ENCODE measurements at regions of chr17 and their contacts with region 1.

Region 1: GRCh38 chr17:75720725-75721462 is at the start of gene ITGB4:
- DNase-seq: peak; percentile 87
- ATAC-seq: peak; percentile 84
- H3K4me3 Mint-ChIP-seq: peak within 1 kb of the TSS; percentile 83
- H3K27ac Mint-ChIP-seq: peak within 1 kb of the TSS; percentile 94
- H3K4me1 Mint-ChIP-seq: peaks cover 7% of the 10 kb centered on the region
- H3K27me3 Mint-ChIP-seq: peaks cover 22% of the 10 kb centered on the region
- CTCF ChIP-seq: no peak
- total RNA-seq, gene ITGB4: 9.5 to 11.2 TPM (median 10.6 TPM) in 3 replicates

Region 2: DNA sequence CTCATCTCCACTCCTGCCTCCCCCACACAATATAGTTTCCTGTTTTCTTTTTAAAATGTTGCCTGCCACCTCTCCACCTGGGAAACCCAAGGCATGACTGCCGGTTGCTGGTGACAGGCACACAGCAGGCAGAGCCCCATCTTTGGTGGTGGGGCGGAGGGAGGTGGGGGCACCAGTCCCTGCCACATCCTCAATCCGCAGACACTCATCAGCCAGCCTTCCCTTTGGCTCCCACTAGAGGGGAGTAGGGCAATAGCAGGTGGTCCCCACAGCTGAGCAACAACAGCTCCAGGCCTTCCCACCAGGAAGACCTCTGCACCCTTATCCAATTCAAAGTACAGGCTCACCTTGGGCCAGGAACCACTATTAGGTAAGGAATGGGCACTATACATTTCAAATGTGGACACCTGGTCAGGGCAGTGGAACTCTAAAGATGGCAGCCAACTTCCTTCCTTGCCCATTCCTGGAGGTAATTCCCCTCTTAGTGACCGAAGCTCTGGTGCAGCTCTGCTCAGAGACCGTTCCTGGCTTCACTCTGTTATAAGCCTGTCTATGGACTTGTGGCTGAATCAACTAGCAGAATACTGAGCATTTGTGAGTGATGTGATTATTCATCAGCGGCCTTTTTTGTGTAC is 67.9 kb before region 1 on chr17:
- CTCF ChIA-PET with region 1: interaction called, 17 read pairs
- POLR2A ChIA-PET with region 1: interaction called, 4 read pairs
- DNase-seq: peak; percentile 76
- ATAC-seq: peak; percentile 99
- H3K4me3 Mint-ChIP-seq: no peak overlapping the region
- H3K27ac Mint-ChIP-seq: peak overlapping the region; percentile 71; the same call in 1 of the 2 replicates
- H3K4me1 Mint-ChIP-seq: no peaks in the 10 kb centered on the region
- H3K27me3 Mint-ChIP-seq: no peaks in the 10 kb centered on the region
- CTCF ChIP-seq: peak; percentile 66; the same call in 1 of the 2 replicates

Region 3: GRCh38 chr17:75693500-75694481 is 27.1 kb before region 1 on chr17:
- CTCF ChIA-PET with region 1: interaction called, 13 read pairs
- POLR2A ChIA-PET with region 1: no interaction called
- DNase-seq: peak; percentile 24
- ATAC-seq: peak; percentile 81
- H3K4me3 Mint-ChIP-seq: no peak overlapping the region
- H3K27ac Mint-ChIP-seq: peak overlapping the region; percentile 53
- H3K4me1 Mint-ChIP-seq: peaks cover 16% of the 10 kb centered on the region
- H3K27me3 Mint-ChIP-seq: no peaks in the 10 kb centered on the region
- CTCF ChIP-seq: no peak

Region 4: DNA sequence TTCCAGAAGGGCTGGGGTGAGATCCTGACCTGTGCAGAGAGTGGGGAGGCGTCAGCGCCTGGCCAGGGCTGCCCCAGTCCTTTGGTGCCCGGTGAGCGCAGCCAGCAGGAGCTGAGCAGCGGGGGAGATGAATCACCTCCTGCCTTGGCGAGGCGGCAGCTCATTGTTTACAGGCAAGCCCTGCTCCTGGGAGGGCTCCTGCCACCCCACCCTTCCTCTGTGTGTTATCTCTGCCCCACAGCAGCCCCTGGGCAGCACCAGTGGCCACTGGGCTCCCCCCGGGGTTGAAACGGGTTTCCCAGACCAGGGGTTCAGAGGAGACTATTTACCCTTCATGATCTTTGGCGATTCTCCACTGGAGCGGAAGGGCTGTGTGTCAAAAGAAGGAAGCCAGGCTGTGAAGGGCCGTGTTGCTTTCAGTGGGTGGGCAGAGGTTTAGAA is 13.7 kb before region 1 on chr17:
- CTCF ChIA-PET with region 1: interaction called, 12 read pairs
- POLR2A ChIA-PET with region 1: no interaction called
- DNase-seq: no peak
- ATAC-seq: no peak
- H3K4me3 Mint-ChIP-seq: no peak overlapping the region
- H3K27ac Mint-ChIP-seq: peak overlapping the region; percentile 11; the same call in 1 of the 2 replicates
- H3K4me1 Mint-ChIP-seq: no peaks in the 10 kb centered on the region
- H3K27me3 Mint-ChIP-seq: no peaks in the 10 kb centered on the region
- CTCF ChIP-seq: no peak

Region 5: GRCh38 chr17:75731716-75732498 is 11.0 kb after region 1 on chr17:
- CTCF ChIA-PET with region 1: interaction called, 11 read pairs
- POLR2A ChIA-PET with region 1: interaction called, 3 read pairs
- DNase-seq: no peak
- ATAC-seq: no peak
- H3K4me3 Mint-ChIP-seq: no peak overlapping the region
- H3K27ac Mint-ChIP-seq: peak overlapping the region; percentile 36
- H3K4me1 Mint-ChIP-seq: no peaks in the 10 kb centered on the region
- H3K27me3 Mint-ChIP-seq: no peaks in the 10 kb centered on the region
- CTCF ChIP-seq: no peak

Region 6: GRCh38 chr17:75758117-75758926 is 37.4 kb after region 1 on chr17:
- CTCF ChIA-PET with region 1: interaction called, 49 read pairs
- POLR2A ChIA-PET with region 1: interaction called, 3 read pairs
- DNase-seq: peak; percentile 41
- ATAC-seq: peak; percentile 68
- H3K4me3 Mint-ChIP-seq: no peak overlapping the region
- H3K27ac Mint-ChIP-seq: no peak overlapping the region
- H3K4me1 Mint-ChIP-seq: peaks cover 13% of the 10 kb centered on the region
- H3K27me3 Mint-ChIP-seq: peaks cover 5% of the 10 kb centered on the region
- CTCF ChIP-seq: no peak